ENCODE measurements at regions of chr4 and their contacts with region 1.

Region 1: DNA sequence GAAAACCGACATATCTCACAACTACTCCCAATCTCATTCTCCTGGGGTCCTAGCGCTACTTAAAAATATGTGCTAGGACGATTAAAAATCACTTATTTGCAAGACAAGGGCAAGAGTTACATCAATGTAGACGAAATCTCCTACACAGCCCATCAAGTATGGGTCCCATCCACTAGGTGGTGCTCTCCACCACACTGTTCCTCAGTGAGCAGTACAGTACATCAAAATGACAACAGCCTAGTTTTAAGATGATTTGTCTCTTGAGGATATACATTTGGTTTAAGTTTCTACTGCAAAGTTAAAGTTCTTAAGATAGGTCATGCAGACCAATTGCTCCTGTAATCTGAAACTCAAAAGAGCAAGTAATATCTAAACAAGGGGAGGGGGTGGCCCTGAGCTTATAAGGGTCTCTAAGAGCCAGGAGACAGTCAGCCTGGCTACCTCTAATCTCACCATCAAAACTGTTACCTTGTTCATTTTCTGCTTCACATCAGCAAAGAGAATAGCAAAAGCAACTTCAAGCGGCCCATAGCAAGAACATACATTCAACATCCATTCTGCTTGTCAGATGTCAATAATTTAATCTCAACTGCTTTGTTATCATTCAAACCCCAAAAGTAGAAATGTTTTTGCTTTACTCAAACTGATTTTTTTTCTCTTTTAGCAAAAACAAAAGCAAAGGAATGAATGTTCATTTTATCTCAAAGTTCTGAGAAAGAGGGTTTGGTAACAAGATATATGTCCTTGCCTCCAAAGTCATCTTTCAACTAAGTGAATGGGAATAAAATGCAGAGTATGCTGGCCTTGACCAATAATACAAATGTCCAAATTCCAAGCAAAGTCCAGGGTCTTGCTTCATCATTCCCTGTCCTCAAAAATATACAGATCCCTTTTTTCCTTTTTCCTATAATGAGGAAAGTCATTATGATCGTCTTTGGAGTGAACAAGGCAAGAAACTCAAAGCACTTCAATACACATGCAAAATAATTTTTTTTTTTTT is 53.1 kb downstream of the STX18 start:
- DNase-seq: peak; percentile 63
- ATAC-seq: peak; percentile 89
- H3K4me3 ChIP-seq: no peak overlapping the region
- H3K27ac ChIP-seq: 0 out of 2 replicates have a peak overlapping the region, but pooled peaks have one; percentile 9
- H3K4me1 ChIP-seq: peaks cover 23% of the 10 kb centered on the region; the same call in 1 of the 2 replicates
- H3K27me3 ChIP-seq: no peaks in the 10 kb centered on the region
- CTCF ChIP-seq: peak; percentile 86 to 95 (median 94)
- EP300 ChIP-seq: no peak
- POLR2A ChIP-seq: no peak
- RAD21 ChIP-seq: peak; percentile 96

Region 2: DNA sequence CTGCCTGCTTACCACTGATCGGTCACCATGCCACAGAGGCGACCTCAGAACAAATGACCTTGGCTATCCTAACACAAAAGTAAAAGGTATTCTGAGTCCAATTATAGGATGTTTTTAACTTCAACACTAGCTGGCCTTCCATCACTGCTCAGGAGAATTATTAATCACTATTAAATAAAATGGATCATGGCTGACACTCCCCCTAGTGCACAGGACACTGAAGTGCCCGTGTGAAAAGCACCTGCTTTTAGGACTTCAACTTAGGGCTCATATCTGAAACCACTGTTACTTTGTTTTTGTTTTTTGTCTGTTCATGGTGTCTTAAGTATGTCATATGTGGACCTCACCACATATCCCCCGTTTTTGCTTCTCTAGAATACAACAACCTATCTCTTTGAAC is 19.2 kb after region 1 on chr4:
- CTCF ChIA-PET with region 1: interaction called, 34 read pairs
- POLR2A ChIA-PET with region 1: interaction called, 3 read pairs
- RAD21 ChIA-PET with region 1: interaction called, 14 read pairs
- SMC1A ChIA-PET with region 1: interaction called, 35 read pairs
- in situ Hi-C with region 1: no loop called
- intact Hi-C with region 1: no loop called
- DNase-seq: no peak
- ATAC-seq: peak; percentile 83
- H3K4me3 ChIP-seq: no peak overlapping the region
- H3K27ac ChIP-seq: no peak overlapping the region
- H3K4me1 ChIP-seq: peaks cover 3% of the 10 kb centered on the region; the same call in 1 of the 2 replicates
- H3K27me3 ChIP-seq: no peaks in the 10 kb centered on the region
- CTCF ChIP-seq: peak; percentile 37 to 56 (median 52); a peak in 5 of 6 replicates
- EP300 ChIP-seq: no peak
- POLR2A ChIP-seq: no peak
- RAD21 ChIP-seq: peak; percentile 28; the same call in 1 of the 2 replicates

Region 3: DNA sequence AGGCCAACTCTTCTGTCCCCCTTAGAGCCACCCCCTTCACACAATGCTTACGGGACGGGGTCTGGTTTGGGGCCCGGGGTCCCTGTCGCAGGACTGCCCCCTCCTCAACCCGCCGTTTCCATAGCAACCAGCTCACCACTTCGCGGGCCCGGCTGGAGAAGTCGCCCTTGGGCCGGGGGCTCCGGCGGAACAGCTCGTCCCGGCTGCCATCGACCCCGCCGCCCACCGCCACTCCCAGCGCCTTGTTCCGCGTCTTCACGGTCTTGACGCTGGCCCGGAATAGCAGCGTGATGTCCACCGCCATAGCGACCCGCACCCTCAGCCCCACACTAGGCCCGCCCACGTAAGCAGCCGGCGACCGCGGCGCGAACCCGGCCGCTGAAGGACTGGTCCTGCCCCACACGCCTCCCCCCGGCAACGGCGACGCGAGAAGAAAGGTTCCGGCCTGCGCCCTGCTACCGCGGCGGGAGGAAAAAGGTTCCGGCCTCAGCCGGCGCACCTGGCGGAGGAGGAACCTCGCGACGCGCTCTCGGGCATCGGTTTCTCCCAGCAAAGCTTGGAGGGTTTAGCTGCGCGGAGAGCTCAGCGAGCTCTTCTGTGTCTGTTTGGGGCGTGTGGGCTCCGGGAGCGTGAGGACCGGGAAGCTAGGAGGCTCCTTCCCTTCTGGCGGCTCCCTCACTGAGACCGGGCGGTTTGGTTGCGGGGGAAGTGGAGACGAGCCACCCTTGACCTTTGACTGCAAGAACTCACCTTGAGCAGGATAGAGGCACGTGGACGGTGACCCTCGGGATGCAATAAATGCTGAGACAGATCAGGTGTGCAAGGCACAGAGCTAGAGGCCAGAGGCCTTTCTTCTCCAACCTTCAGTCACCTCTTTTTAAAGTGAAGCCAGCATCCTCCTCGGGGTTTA is 53.2 kb after region 1 on chr4 and contains the start of gene STX18:
- CTCF ChIA-PET with region 1: interaction called, 10 read pairs
- POLR2A ChIA-PET with region 1: interaction called, 5 read pairs
- RAD21 ChIA-PET with region 1: interaction called, 5 read pairs
- SMC1A ChIA-PET with region 1: interaction called, 13 read pairs
- in situ Hi-C with region 1: no loop called
- intact Hi-C with region 1: loop called (anchors 1 kb)
- DNase-seq: peak; percentile 48
- ATAC-seq: peak; percentile 92
- H3K4me3 ChIP-seq: peak within 1 kb of the TSS; percentile 80
- H3K27ac ChIP-seq: peak within 1 kb of the TSS; percentile 92
- H3K4me1 ChIP-seq: 0 out of 2 replicates have a peak, but pooled peaks cover 2% of the 10 kb centered on the region
- H3K27me3 ChIP-seq: no peaks in the 10 kb centered on the region
- CTCF ChIP-seq: no peak
- EP300 ChIP-seq: peak; percentile 43 to 45; a peak in 1 of 4 replicates
- POLR2A ChIP-seq: peak; percentile 96
- RAD21 ChIP-seq: 0 out of 2 replicates have a peak, but pooled peaks have one; percentile 13
- polyA plus RNA-seq, gene STX18: 8.2 to 13.6 TPM

Region 4: DNA sequence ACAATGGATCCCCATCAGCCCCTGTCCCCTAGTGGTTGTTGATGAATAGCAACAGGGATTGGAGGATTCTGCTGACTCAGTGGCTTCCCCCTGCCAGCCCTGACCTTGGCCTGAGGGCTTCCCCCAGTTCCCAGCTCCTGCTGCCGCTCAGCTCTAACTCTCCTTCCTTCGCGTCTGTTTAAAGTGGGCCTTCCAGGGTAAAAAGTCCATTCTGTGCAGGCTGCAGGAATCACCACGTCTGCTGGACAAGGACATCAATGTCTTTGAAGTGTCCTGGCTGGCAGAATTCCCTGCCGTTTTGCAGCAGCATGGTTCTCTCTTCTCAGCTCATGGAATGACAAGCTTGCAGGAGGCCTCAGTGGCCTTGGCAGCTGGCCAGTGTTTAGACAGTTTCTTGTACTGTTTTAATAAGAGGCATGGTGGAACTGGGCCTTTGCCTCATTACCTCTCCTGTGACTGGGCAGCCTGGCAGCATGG is 205.6 kb after region 1 on chr4:
- CTCF ChIA-PET with region 1: no interaction called
- POLR2A ChIA-PET with region 1: no interaction called
- RAD21 ChIA-PET with region 1: no interaction called
- SMC1A ChIA-PET with region 1: no interaction called
- in situ Hi-C with region 1: no loop called
- intact Hi-C with region 1: loop called (anchors 5 kb)
- DNase-seq: no peak
- ATAC-seq: no peak
- H3K4me3 ChIP-seq: no peak overlapping the region
- H3K27ac ChIP-seq: no peak overlapping the region
- H3K4me1 ChIP-seq: peaks cover 13% of the 10 kb centered on the region
- H3K27me3 ChIP-seq: no peaks in the 10 kb centered on the region
- CTCF ChIP-seq: peak in 2 of 3 experiments; percentile 14 to 29; a peak in 1 of 6 replicates
- EP300 ChIP-seq: no peak
- POLR2A ChIP-seq: no peak
- RAD21 ChIP-seq: no peak

Region 5: DNA sequence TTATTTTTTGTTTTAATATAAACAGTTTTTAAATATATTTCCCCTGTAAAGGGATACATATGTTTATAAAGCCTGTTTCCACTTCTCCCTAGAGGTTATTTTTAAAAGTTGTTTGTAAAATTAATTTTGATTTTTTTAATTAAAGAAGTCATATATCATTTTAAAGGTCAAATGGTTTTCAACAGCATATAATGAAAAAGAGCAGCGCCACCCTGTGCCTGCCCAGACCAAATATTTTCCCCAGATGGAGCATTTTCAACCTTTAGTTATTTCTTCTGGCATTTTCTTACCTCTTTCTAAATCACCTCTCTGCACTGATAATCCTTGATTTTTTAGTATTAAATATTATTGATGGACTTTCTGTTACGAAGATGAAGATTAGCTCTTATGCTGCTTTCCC is 391.8 kb after region 1 on chr4:
- CTCF ChIA-PET with region 1: interaction called, 40 read pairs
- POLR2A ChIA-PET with region 1: no interaction called
- RAD21 ChIA-PET with region 1: interaction called, 13 read pairs
- SMC1A ChIA-PET with region 1: interaction called, 21 read pairs
- in situ Hi-C with region 1: loop called (anchors 5 kb)
- intact Hi-C with region 1: loop called (anchors 1 kb)
- DNase-seq: no peak
- ATAC-seq: no peak
- H3K4me3 ChIP-seq: no peak overlapping the region
- H3K27ac ChIP-seq: no peak overlapping the region
- H3K4me1 ChIP-seq: no peaks in the 10 kb centered on the region
- H3K27me3 ChIP-seq: no peaks in the 10 kb centered on the region
- CTCF ChIP-seq: peak; percentile 17 to 49 (median 29); a peak in 3 of 6 replicates
- EP300 ChIP-seq: no peak
- POLR2A ChIP-seq: no peak
- RAD21 ChIP-seq: peak; percentile 58

Region 6: GRCh38 chr4:5812506-5813229 is 1324.0 kb after region 1 on chr4:
- CTCF ChIA-PET with region 1: no interaction called
- POLR2A ChIA-PET with region 1: no interaction called
- RAD21 ChIA-PET with region 1: no interaction called
- SMC1A ChIA-PET with region 1: no interaction called
- in situ Hi-C with region 1: loop called (anchors 10 kb)
- intact Hi-C with region 1: no loop called
- DNase-seq: no peak
- ATAC-seq: peak; percentile 92
- H3K4me3 ChIP-seq: no peak overlapping the region
- H3K27ac ChIP-seq: no peak overlapping the region
- H3K4me1 ChIP-seq: no peaks in the 10 kb centered on the region
- H3K27me3 ChIP-seq: no peaks in the 10 kb centered on the region
- CTCF ChIP-seq: peak; percentile 55 to 74 (median 69); a peak in 5 of 6 replicates
- EP300 ChIP-seq: no peak
- POLR2A ChIP-seq: no peak
- RAD21 ChIP-seq: peak; percentile 91